Uterus (tissue), 4 donors: ENCODE measurements at regions of chr10 and their contacts with region 1.

Region 1: DNA sequence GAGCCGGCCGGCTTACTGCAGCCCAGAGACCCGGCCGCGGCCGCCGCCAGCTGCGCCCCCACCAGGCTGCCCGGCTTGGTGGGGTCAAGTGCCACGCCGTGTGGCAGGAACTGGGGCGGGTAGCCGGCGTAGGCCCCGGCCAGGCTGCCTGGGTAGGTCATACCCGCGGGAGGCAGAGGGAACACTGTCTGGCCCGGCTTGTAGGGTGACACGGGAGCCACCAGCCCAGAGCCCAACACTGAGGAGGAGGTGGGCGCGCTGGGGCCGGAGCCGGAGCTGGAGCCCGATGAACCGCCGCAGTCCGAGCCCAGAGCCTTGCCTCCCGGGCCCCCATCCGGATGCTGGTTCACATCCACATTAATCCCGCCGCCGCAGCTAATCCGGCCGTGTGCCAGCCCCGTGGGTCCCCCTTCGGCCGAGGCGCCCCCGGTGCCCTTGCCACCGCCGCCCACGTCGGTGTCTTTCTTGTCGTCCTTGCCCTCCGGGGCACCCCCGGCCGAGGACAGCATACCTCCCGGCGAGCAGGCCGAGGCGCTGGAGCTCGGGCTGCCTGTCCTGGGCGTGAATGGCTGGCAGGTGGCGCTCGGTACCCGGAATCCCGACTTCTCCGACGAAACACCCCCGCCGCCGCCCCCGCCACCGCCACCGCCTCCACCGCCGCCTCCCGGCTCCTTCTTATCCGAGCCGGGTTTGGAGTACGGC is 2.0 kb downstream of the ZNF503 start:
- DNase-seq: peak; percentile 85 to 88
- H3K4me3 ChIP-seq: peak overlapping the region; percentile 81 to 82
- H3K27ac ChIP-seq: peak overlapping the region; percentile 97 to 98
- H3K4me1 ChIP-seq: peaks cover 0 to under 1% of the 10 kb centered on the region in 2 donors
- H3K27me3 ChIP-seq: no peaks in the 10 kb centered on the region
- CTCF ChIP-seq: peak; percentile 50 to 79 (median 58)
- POLR2A ChIP-seq: no peak

Region 2: DNA sequence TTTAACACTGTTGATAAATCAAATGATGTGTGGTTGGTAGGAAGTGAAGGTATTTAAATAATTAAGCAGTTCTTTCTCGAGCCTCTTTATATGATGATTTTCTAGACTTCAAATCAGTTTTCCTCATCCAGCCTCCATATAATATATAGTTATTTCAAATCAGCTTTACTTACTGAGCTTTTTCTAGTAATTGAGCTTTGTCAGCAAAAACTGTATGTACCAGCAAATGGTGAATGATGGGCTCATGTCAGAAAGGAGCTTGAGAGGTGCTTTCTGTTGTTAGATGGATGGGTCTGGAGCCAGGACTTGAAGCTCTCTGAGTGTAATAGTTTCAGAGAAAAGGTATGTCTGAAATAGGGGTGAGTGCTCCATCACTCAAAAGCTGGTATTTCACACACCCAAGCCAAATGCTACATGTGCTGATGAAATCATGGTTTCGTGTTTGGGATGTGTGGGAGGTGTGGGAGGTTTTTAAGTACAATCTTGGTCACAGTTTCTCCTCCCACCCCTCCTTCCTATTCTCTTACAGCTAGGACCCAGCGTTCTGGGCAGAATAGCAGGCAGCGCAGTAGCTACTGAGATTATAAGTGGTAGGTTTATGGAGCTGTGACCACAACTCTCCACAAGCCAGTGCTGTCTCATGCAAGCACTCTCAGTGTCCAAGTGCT is 87.6 kb after region 1 on chr10:
- intact Hi-C with region 1: no loop called
- DNase-seq: peak in 1 of 2 donors; percentile 41
- H3K4me3 ChIP-seq: no peak overlapping the region
- H3K27ac ChIP-seq: no peak overlapping the region
- H3K4me1 ChIP-seq: no peaks in the 10 kb centered on the region
- H3K27me3 ChIP-seq: no peaks in the 10 kb centered on the region
- CTCF ChIP-seq: no peak
- POLR2A ChIP-seq: no peak

Region 3: DNA sequence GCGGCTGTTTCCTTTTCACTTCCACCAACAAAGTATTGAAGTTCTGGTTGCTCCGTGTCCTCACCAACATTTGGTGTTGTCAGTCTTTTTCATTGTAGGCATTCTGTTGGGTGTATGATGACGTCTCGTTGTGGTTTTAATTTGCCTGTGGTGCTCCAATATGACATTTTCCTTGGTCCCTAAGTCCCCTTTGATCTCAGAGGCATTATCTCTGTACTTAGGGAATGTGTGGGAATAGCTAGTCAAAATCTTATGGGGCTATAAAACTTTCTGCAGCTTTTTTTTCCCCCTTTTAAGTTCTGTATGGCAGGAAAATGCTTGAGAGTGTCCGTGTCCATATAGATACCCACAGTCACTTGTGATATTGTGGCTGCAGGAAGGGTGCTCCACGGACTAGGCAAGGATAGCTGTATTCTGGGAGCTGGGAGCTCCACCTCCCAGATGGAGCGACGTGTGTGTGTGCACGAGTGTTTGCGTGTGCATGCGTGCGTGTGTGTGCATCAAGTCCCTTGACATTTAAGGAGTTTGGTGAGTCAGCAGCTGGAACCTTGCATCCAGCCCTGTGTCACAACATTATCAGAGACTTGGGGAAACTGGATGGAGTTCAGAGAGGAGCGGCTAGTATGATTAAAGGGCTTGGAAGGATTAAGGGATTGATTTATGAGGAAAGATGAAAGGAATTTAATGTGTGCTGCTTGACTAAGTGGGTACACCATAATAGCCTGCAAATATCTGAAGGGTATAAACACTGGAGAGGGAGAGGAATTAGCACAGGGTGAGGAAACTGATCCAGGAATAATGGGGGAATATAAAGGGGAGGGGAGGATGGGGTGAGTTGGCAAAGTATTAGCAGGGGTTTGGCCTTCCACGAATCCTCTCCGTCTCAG is 98.6 kb after region 1 on chr10:
- intact Hi-C with region 1: no loop called
- DNase-seq: peak; percentile 65 to 70
- H3K4me3 ChIP-seq: no peak overlapping the region
- H3K27ac ChIP-seq: peak overlapping the region in 1 of 2 donors; percentile 37
- H3K4me1 ChIP-seq: no peaks in the 10 kb centered on the region
- H3K27me3 ChIP-seq: no peaks in the 10 kb centered on the region
- CTCF ChIP-seq: no peak
- POLR2A ChIP-seq: no peak

Region 4: GRCh38 chr10:75904499-75905283 is 505.1 kb after region 1 on chr10:
- intact Hi-C with region 1: loop called (anchors 10 kb)
- DNase-seq: no peak
- H3K4me3 ChIP-seq: no peak overlapping the region
- H3K27ac ChIP-seq: no peak overlapping the region
- H3K4me1 ChIP-seq: no peaks in the 10 kb centered on the region
- H3K27me3 ChIP-seq: no peaks in the 10 kb centered on the region
- CTCF ChIP-seq: no peak
- POLR2A ChIP-seq: no peak

Region 5: GRCh38 chr10:76033457-76034196 is 634.0 kb after region 1 on chr10:
- intact Hi-C with region 1: loop called (anchors 5 kb)
- DNase-seq: peak in 1 of 2 donors; percentile 21
- H3K4me3 ChIP-seq: no peak overlapping the region
- H3K27ac ChIP-seq: peak overlapping the region; percentile 42 to 74
- H3K4me1 ChIP-seq: peaks cover 6% of the 10 kb centered on the region in 2 donors
- H3K27me3 ChIP-seq: no peaks in the 10 kb centered on the region
- CTCF ChIP-seq: peak in 1 of 4 experiments; percentile 20
- POLR2A ChIP-seq: no peak

Region 6: DNA sequence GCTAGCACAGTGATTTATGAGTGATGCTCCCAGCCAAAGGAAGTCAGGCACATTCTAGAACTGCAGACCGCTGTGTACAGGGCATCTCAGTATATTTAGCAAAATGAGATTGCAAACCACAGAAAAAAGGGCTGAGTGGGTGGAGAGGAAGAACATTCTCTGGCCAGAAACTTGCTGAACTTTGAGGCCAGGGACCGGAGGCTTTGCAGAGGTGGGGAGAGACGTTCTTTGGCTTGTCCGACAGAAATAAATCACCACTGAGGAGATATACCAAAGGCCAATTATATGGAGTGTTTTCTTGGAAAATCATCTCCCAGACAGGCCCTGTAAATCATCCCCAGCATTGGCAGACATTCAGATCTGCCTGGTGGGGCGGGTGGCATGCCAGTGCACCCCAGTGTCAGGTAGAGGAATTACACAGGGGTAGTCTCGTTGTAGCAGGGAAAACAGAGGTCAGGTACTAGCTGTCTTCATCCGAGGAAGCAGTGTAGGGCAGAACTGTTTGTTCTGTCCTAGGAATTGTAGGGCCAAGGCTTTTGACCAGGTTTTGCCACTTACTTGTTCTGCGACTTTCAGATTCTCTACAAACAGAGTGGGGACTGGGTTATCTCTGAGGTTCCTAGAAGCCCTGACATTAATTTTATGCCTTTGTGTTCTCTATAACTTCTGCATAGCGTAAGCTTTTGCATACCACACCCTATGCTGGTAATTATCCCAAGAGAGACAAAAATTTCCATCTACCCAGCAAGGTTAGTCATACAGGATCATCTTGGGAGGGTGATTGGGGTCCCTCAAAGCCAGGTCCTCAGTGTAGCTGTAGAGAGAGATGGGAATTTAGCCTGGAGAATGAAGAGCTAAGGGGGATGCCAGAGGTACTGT is 687.4 kb after region 1 on chr10:
- intact Hi-C with region 1: loop called (anchors 5 kb)
- DNase-seq: peak; percentile 87 to 91
- H3K4me3 ChIP-seq: no peak overlapping the region
- H3K27ac ChIP-seq: peak overlapping the region; percentile 67 to 70
- H3K4me1 ChIP-seq: peaks cover 0 to 5% of the 10 kb centered on the region in 2 donors
- H3K27me3 ChIP-seq: no peaks in the 10 kb centered on the region
- CTCF ChIP-seq: peak; percentile 55 to 81 (median 69)
- POLR2A ChIP-seq: no peak

Region 7: GRCh38 chr10:76303682-76304316 is 904.2 kb after region 1 on chr10:
- intact Hi-C with region 1: loop called (anchors 10 kb)
- DNase-seq: peak; percentile 75 to 82
- H3K4me3 ChIP-seq: no peak overlapping the region
- H3K27ac ChIP-seq: peak overlapping the region; percentile 42 to 60
- H3K4me1 ChIP-seq: peaks cover 0 to 5% of the 10 kb centered on the region in 2 donors
- H3K27me3 ChIP-seq: no peaks in the 10 kb centered on the region
- CTCF ChIP-seq: peak; percentile 44 to 65 (median 55)
- POLR2A ChIP-seq: no peak